ENCODE measurements at regions of chr17 and their contacts with region 1.

Region 1: DNA sequence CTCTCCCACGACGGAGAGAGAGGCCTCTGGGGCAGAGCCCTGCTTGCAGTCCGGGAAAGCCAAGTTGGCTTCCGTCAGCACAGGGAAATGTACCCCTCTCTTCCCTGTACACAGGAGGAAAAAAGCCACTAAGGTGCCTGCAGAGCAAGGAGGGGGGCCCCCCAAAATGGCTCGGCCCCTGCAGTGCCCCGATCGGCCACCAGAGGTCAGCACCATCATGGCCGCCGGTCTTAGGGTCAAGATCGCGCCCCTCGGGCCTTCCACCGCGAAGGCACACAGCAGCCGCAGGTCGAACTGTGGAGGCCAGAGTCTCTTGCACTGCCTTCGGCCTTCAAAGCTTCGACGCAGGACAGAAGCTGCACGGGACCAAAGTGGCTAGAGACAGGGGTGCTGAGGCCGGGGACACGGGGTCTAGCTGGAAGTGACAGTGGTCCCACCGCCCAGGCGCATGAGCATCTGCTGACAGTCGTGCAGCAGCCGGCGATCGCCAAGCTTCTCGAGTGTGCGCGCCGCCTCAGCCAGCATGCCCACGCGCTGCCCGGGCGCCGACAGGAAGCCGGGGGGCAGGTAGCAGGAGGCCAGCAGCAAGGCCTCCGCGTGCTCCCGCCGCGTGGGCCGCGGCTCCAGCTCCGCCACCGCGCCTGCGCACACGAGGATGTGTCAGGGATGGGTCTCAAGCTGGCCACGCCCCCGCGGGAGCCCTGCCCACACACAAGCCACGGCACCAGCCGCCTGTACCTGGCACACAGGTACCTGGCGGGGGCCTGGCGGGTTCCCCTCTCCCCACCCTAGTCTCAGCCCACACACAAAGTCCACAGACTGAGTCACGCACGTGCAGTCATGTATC is 24.4 kb downstream of the SREBF1 start:
- DNase-seq: peak; percentile 63
- ATAC-seq: peak; percentile 32
- H3K4me3 ChIP-seq: no peak overlapping the region
- H3K27ac ChIP-seq: no peak overlapping the region
- H3K4me1 ChIP-seq: peaks cover 9% of the 10 kb centered on the region
- H3K27me3 ChIP-seq: no peaks in the 10 kb centered on the region
- CTCF ChIP-seq: peak; percentile 99

Region 2: DNA sequence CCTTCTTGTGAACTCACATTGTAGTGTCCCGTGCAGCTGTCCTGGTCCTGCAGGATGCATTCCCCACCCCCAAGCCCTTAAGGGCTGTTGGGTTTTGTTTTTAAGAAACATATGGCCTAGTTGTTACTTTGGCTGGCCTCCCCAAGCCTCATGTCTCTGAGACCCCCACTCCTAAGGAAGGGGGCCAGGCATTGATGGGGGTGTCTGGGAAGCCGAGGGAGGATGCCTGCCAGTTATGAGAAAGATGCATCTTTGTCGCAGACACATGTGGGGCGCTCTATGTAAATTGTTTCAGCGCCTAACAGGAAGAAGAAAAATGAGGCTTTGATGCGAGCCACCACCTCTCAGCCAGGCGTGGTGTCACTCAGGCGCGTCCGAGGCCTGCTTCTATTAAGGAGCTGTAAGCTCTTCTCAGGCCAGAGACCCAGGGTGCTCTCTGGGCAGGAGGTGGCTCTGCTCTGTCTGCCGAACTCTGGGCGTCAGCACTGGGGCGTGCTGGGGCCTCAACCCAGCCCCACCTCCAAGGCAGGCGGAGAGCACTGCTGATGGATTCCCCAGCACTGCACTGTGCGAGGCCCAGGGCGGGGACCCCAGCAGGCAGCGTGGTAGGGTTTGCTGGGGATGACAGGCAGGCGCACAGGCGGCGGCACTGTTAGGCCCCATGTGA is 46.2 kb before region 1 on chr17:
- CTCF ChIA-PET with region 1: no interaction called
- POLR2A ChIA-PET with region 1: no interaction called
- intact Hi-C with region 1: no loop called
- DNase-seq: no peak
- ATAC-seq: no peak
- H3K4me3 ChIP-seq: no peak overlapping the region
- H3K27ac ChIP-seq: no peak overlapping the region
- H3K4me1 ChIP-seq: no peaks in the 10 kb centered on the region
- H3K27me3 ChIP-seq: no peaks in the 10 kb centered on the region
- CTCF ChIP-seq: no peak

Region 3: DNA sequence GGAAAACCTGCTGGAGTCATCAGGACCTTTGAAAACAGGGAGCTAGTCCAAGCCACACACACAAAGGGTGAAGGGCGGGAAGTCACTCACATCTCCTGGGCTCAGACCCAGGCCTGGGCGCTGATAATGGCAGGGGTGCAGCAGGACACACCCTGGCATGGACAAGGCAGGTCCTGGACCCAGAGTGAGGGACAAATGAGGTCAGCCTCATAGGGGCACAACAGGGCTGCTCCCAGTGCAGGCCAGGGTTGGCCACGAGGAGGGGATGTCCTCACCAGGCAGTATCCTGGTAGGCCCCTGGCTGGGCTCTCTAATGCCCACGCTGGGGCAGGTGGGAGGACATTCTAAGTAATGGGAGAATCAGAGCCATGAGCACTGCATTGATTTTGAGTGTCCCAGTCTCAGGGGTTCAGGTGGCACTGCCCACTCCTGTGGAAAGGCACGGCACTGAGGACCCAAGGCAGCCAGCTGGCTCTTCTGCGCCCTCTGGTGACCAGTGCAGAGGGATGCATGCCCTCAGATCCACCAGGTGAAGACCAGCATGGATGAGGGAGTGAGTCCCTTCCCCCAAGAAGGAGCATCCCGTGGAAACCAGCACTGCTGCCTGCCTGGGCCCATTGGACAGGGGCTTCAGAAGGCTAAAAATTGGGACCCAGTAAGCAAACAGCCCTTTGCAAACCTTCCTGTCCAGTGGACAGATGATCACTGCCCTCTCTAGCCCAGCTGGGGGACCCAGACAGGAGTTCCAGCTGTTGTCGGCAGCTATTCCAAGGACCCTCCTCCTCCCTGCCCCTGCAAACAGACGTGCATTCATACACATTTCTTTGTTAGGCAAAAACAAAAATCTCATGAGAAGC is 47.7 kb after region 1 on chr17:
- CTCF ChIA-PET with region 1: no interaction called
- POLR2A ChIA-PET with region 1: no interaction called
- intact Hi-C with region 1: loop called (anchors 2 kb)
- DNase-seq: peak; percentile 78
- ATAC-seq: peak; percentile 89
- H3K4me3 ChIP-seq: no peak overlapping the region
- H3K27ac ChIP-seq: no peak overlapping the region
- H3K4me1 ChIP-seq: peaks cover 4% of the 10 kb centered on the region
- H3K27me3 ChIP-seq: no peaks in the 10 kb centered on the region
- CTCF ChIP-seq: peak; percentile 97

Region 4: GRCh38 chr17:18087610-18088491 is 275.4 kb after region 1 on chr17 and contains the start of gene DRG2:
- CTCF ChIA-PET with region 1: no interaction called
- POLR2A ChIA-PET with region 1: no interaction called
- intact Hi-C with region 1: no loop called
- DNase-seq: peak; percentile 96
- ATAC-seq: peak; percentile 94
- H3K4me3 ChIP-seq: peak within 1 kb of the TSS; percentile 97
- H3K27ac ChIP-seq: peak within 1 kb of the TSS; percentile 50
- H3K4me1 ChIP-seq: peaks cover 9% of the 10 kb centered on the region
- H3K27me3 ChIP-seq: no peaks in the 10 kb centered on the region
- CTCF ChIP-seq: no peak
- total RNA-seq, gene DRG2: 84.1 and 102 TPM in 2 replicates